ENCODE measurements at regions of chr19 and their contacts with region 1.

Region 1: DNA sequence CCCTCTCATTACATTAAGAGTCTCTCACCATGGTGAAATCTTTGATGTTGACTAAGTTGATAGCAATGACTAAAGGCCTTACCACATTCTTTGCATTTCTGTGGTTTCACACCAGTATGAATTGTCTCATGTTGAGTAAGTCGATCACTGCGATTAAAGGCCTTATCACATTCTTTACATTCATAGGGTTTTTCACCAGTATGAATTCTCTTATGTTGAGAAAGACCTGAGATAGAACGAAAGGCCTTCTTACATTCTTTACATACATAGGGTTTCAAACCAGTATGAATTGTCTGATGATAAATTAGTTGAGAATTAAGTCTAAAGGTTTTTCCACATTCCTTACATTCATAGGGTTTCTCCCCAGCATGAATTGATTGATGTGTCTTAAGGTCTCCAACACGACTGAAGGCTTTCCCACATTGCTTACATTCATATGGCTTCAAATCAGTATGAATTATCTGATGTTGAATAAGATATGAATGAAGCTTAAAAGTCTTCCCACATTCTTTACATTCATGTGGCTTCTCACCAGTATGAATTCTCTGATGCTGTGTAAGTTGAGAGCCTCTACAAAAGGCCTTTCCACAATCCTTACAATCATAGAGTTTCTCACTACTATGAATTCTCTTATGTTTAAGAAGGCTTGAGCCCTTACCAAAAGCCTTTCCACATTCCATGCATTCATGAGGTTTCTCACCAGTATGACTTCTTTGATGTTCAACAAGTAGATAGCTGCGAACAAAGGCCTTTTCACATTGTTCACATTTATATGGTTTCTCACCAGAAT is 45.6 kb downstream of the ZNF283 start:
- DNase-seq: no peak
- ATAC-seq: no peak
- H3K4me3 Mint-ChIP-seq: no peak overlapping the region
- H3K27ac Mint-ChIP-seq: no peak overlapping the region
- H3K4me1 Mint-ChIP-seq: no peaks in the 10 kb centered on the region
- H3K27me3 Mint-ChIP-seq: no peaks in the 10 kb centered on the region

Region 2: GRCh38 chr19:44460178-44460577 is 587.4 kb after region 1 on chr19:
- CTCF ChIA-PET with region 1: no interaction called
- POLR2A ChIA-PET with region 1: no interaction called
- intact Hi-C with region 1: loop called in 1 of 2 experiments (anchors 10 kb)
- DNase-seq: no peak
- ATAC-seq: no peak
- H3K4me3 Mint-ChIP-seq: no peak overlapping the region
- H3K27ac Mint-ChIP-seq: no peak overlapping the region
- H3K4me1 Mint-ChIP-seq: no peaks in the 10 kb centered on the region
- H3K27me3 Mint-ChIP-seq: no peaks in the 10 kb centered on the region